GM12878 (cell line): ENCODE measurements at regions of chr17 and their contacts with region 1.

Region 1: DNA sequence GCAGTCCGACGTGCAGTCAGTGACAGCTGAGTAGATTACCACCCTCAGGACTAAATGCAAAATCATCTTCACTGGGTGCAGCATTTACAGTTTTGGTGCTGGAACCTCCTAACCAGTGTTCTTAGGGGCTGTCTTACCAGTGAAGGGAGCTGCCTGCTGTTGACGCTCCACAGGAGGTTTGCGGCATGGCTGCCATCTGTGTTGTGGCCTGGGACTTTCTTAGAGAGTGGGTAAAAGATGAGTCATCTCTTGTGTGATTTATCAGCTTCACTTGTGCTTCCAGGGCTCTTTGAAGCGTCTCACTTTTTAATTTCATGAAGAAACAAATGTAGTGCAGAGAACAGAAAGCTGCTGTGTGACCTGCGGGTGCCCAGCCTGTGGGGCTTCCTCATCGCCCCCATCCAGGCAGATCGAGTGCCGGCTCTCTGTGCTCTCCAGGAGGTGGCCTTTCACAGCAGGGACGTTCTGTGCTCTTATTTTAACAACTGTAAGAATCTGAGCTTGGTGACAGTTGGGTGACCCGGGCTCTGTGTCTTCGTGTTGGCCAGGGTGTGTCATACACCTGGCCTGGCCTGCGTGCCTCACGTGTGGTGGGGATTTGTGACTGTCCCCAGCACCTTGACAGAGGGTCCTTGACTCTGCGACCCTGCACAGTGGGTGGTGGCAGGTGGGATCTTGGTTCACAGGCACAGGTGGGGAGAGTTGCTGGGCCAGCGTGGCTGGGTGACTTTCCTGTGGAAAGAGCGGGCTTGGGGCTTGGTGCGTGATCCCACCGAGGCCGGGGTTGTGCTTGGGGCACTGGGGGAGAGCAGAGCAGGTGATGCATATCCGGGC is 24.3 kb upstream of the ZNF750 start:
- DNase-seq: peak; percentile 97
- ATAC-seq: peak; percentile 84
- H3K4me3 ChIP-seq: peak overlapping the region; percentile 31; the same call in 1 of the 2 replicates
- H3K27ac ChIP-seq: peak overlapping the region; percentile 98
- H3K4me1 ChIP-seq: peaks cover 74% of the 10 kb centered on the region
- H3K27me3 ChIP-seq: no peaks in the 10 kb centered on the region
- CTCF ChIP-seq: no peak
- EP300 ChIP-seq: peak; percentile 82 to 91
- POLR2A ChIP-seq: peak; percentile 70
- RAD21 ChIP-seq: no peak

Region 2: DNA sequence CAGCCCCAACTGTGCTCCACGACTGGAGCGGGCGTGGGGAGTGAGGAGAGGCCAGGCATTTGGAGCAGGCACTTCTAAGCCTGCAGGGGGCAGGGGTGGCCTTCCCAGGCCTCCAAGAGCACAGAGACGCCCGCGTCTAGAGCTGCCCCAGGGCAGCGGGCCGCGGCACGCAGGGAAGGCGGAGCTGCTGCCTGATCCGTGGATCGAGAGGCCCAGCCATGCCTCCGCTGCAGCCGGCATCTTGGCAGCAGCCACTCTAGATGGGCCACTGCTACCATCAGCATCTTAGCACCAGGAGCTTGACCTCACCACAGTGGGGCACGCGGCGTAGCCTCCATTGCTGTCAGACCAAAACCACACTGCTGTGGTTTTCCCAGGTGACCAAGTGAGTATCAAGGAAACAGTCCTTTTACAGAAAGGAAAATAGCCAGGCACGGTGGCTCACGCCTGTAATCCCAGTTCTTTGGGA is 195.5 kb before region 1 on chr17:
- CTCF ChIA-PET with region 1: no interaction called
- POLR2A ChIA-PET with region 1: no interaction called
- RAD21 ChIA-PET with region 1: no interaction called
- SMC1A ChIA-PET with region 1: no interaction called
- in situ Hi-C with region 1: no loop called
- intact Hi-C with region 1: no loop called
- DNase-seq: no peak
- ATAC-seq: peak; percentile 77
- H3K4me3 ChIP-seq: no peak overlapping the region
- H3K27ac ChIP-seq: no peak overlapping the region
- H3K4me1 ChIP-seq: no peaks in the 10 kb centered on the region
- H3K27me3 ChIP-seq: no peaks in the 10 kb centered on the region
- CTCF ChIP-seq: peak; percentile 43 to 56 (median 46); a peak in 4 of 6 replicates
- EP300 ChIP-seq: no peak
- POLR2A ChIP-seq: no peak
- RAD21 ChIP-seq: peak; percentile 74

Region 3: GRCh38 chr17:82788206-82789001 is 75.8 kb before region 1 on chr17:
- CTCF ChIA-PET with region 1: no interaction called
- POLR2A ChIA-PET with region 1: interaction called, 10 read pairs
- RAD21 ChIA-PET with region 1: interaction called, 3 read pairs
- SMC1A ChIA-PET with region 1: no interaction called
- in situ Hi-C with region 1: no loop called
- intact Hi-C with region 1: loop called (anchors 10 kb)
- DNase-seq: no peak
- ATAC-seq: no peak
- H3K4me3 ChIP-seq: no peak overlapping the region
- H3K27ac ChIP-seq: no peak overlapping the region
- H3K4me1 ChIP-seq: peaks cover 8% of the 10 kb centered on the region; the same call in 1 of the 2 replicates
- H3K27me3 ChIP-seq: no peaks in the 10 kb centered on the region
- CTCF ChIP-seq: no peak
- EP300 ChIP-seq: no peak
- POLR2A ChIP-seq: no peak
- RAD21 ChIP-seq: no peak

Region 4: DNA sequence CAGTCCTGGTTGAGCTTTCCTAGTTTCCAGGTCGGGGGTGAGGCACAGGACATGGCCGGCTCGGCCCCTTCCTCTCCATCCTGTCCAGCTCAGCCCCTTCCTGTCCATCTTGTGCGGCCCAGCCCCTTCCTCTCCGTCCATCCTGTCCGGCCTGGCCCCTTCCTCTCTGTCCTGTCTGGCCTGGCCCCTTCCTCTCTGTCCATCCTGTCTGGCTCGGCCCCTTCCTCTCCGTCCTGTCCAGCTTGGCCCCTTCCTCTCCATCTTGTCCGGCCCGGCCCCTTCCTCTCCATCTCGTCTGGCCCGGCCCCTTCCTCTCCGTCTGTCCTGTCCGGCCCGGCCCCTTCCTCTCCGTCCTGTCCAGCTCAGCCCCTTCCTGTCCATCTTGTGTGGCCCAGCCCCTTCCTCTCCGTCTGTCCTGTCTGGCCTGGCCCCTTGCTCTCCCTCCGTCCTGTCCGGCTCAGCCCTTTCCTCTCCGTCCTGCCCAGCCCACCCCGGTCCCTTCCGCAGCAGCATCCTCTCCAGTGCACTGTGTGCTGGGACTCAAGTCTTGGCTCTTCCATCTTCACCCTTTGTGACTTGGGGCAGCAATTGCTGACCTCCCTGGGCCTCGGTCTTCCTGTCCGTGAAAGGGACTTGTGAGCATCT is 18.9 kb before region 1 on chr17:
- CTCF ChIA-PET with region 1: interaction called, 4 read pairs
- POLR2A ChIA-PET with region 1: no interaction called
- RAD21 ChIA-PET with region 1: interaction called, 13 read pairs
- SMC1A ChIA-PET with region 1: interaction called, 7 read pairs
- in situ Hi-C with region 1: no loop called
- intact Hi-C with region 1: no loop called
- DNase-seq: no peak
- ATAC-seq: no peak
- H3K4me3 ChIP-seq: no peak overlapping the region
- H3K27ac ChIP-seq: no peak overlapping the region
- H3K4me1 ChIP-seq: peaks cover 18% of the 10 kb centered on the region
- H3K27me3 ChIP-seq: no peaks in the 10 kb centered on the region
- CTCF ChIP-seq: no peak
- EP300 ChIP-seq: no peak
- POLR2A ChIP-seq: no peak
- RAD21 ChIP-seq: no peak

Region 5: DNA sequence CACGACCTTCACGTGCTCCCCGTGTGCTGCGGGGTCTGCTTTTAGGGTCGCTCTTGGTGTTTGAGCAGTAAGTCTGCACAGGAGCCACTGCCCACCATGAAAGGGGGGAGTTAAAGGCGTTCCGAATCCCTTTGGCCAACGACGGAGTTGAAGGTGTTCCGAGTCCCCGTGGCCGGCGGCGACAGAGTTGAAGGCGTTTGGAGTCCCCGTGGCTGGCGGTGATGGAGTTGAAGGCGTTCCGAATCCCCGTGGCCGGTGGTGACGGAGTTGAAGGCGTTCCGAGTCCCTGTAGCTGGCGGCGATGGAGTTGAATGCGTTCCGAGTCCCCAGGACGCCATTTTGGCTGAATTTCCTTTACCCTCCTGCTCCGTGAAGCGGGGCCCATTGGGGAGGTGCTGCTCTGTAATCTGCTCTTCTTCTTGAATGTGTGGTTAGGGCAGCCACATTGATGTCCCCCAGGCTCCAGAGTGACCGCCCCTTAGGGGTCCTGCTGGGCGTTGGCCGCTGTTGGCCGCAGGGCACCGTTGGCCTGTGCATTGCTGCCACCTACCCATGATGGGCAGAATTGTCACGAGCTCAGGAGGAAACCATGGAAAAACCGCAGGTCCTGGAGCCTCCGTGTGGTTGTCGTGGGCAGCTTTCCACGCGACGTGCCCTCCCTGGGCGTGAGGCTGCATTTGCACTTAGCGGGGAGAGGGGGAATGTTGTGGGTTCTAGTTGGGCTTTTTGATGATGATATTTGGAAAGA is 49.3 kb after region 1 on chr17:
- CTCF ChIA-PET with region 1: interaction called, 9 read pairs
- POLR2A ChIA-PET with region 1: no interaction called
- RAD21 ChIA-PET with region 1: interaction called, 6 read pairs
- SMC1A ChIA-PET with region 1: interaction called, 14 read pairs
- in situ Hi-C with region 1: no loop called
- intact Hi-C with region 1: loop called (anchors 2 kb)
- DNase-seq: no peak
- ATAC-seq: no peak
- H3K4me3 ChIP-seq: no peak overlapping the region
- H3K27ac ChIP-seq: no peak overlapping the region
- H3K4me1 ChIP-seq: peaks cover 28% of the 10 kb centered on the region
- H3K27me3 ChIP-seq: no peaks in the 10 kb centered on the region
- CTCF ChIP-seq: no peak; a peak in 1 of 6 replicates
- EP300 ChIP-seq: no peak
- POLR2A ChIP-seq: no peak
- RAD21 ChIP-seq: peak; percentile 44; the same call in 1 of the 2 replicates